Pancreas (tissue), 10 donors: ENCODE measurements at regions of chr1 and their contacts with region 1.

Region 1: GRCh38 chr1:13662493-13662892 is 37.5 kb upstream of the PRDM2 start:
- DNase-seq: no peak
- ATAC-seq: peak in 1 of 4 donors; percentile 43
- H3K4me3 ChIP-seq: no peak overlapping the region
- H3K27ac ChIP-seq: no peak overlapping the region
- H3K4me1 ChIP-seq: no peaks in the 10 kb centered on the region
- H3K27me3 ChIP-seq: no peaks in the 10 kb centered on the region
- CTCF ChIP-seq: no peak

Region 2: DNA sequence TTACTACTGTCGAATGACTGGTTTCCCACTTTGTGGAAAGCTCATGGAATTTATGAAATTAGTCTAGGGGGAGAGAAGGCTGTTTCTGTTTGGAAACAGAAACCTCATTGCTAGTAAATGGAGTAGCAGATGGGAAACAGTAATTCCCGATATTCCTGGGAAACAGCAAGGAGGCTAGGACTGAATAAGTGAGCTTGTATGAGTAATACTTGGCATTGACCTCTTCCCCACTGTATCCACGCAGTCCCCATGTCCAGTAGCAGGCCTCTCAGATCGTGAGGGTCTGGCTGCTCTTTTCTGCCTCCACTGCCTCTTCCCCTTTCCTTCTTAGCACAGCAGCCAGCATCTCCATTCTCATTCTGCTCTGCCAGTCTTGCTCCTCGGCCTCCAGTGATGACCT is 113.0 kb after region 1 on chr1:
- intact Hi-C with region 1: no loop called
- DNase-seq: no peak
- ATAC-seq: no peak
- H3K4me3 ChIP-seq: no peak overlapping the region
- H3K27ac ChIP-seq: no peak overlapping the region
- H3K4me1 ChIP-seq: no peaks in the 10 kb centered on the region
- H3K27me3 ChIP-seq: no peaks in the 10 kb centered on the region
- CTCF ChIP-seq: no peak

Region 3: DNA sequence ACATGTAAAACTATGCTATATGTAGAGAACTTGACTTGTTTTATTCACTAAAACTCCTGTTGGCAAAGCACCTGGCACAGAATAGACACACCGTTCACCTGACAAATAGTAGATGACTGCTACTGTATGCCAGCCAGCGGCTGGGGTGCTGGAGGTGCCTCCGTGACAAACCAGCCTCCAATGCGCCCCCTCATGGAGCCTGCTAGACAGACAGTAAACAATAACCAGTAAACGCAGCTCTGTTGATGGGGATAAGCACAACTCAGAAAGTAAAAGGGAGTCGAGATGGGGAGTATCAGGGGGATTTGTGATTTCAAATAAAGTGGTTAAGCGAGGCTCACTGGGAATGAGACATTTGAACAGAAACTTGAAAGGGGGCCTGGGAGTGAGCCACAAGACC is 144.7 kb after region 1 on chr1:
- intact Hi-C with region 1: loop called in 1 of 3 experiments (anchors 10 kb)
- DNase-seq: peak in 1 of 6 donors; percentile 46
- ATAC-seq: peak in 3 of 4 donors; percentile 52 to 72 (median 57)
- H3K4me3 ChIP-seq: no peak overlapping the region
- H3K27ac ChIP-seq: no peak overlapping the region
- H3K4me1 ChIP-seq: no peaks in the 10 kb centered on the region
- H3K27me3 ChIP-seq: no peaks in the 10 kb centered on the region
- CTCF ChIP-seq: peak in 1 of 4 donors; percentile 28

Region 4: GRCh38 chr1:13960375-13960987 is 298.0 kb after region 1 on chr1:
- intact Hi-C with region 1: loop called (anchors 5 to 10 kb)
- DNase-seq: peak; percentile 34 to 84 (median 65)
- ATAC-seq: peak; percentile 61 to 91 (median 86)
- H3K4me3 ChIP-seq: no peak overlapping the region
- H3K27ac ChIP-seq: no peak overlapping the region
- H3K4me1 ChIP-seq: no peaks in the 10 kb centered on the region
- H3K27me3 ChIP-seq: peaks cover 0 to 2% (median 0%) of the 10 kb centered on the region in 4 donors
- CTCF ChIP-seq: peak; percentile 92 to 95 (median 94)

Region 5: GRCh38 chr1:14055442-14056223 is 393.1 kb after region 1 on chr1:
- intact Hi-C with region 1: no loop called
- DNase-seq: no peak
- ATAC-seq: peak in 3 of 4 donors; percentile 31 to 68 (median 56)
- H3K4me3 ChIP-seq: no peak overlapping the region
- H3K27ac ChIP-seq: no peak overlapping the region
- H3K4me1 ChIP-seq: no peaks in the 10 kb centered on the region
- H3K27me3 ChIP-seq: no peaks in the 10 kb centered on the region
- CTCF ChIP-seq: no peak